Activated CD8-positive, alpha-beta T cell treated with anti-CD3 and anti-CD28 coated beads for 36 hours (primary cell): ENCODE measurements at regions of chr4 and their contacts with region 1.

Region 1: GRCh38 chr4:57163530-57164459 is 53.6 kb upstream of the IGFBP7 start:
- DNase-seq: peak; percentile 81
- ATAC-seq: peak; percentile 97
- H3K4me3 Mint-ChIP-seq: peak overlapping the region; percentile 78
- H3K27ac Mint-ChIP-seq: peak overlapping the region; percentile 43
- H3K4me1 Mint-ChIP-seq: peaks cover 8% of the 10 kb centered on the region
- H3K27me3 Mint-ChIP-seq: peaks cover 29% of the 10 kb centered on the region
- CTCF ChIP-seq: peak; percentile 88

Region 2: GRCh38 chr4:57139783-57140182 is 24.0 kb before region 1 on chr4:
- CTCF ChIA-PET with region 1: interaction called, 11 read pairs
- POLR2A ChIA-PET with region 1: no interaction called
- intact Hi-C with region 1: no loop called
- DNase-seq: no peak
- ATAC-seq: no peak
- H3K4me3 Mint-ChIP-seq: no peak overlapping the region
- H3K27ac Mint-ChIP-seq: no peak overlapping the region
- H3K4me1 Mint-ChIP-seq: no peaks in the 10 kb centered on the region
- H3K27me3 Mint-ChIP-seq: peaks cover 5% of the 10 kb centered on the region
- CTCF ChIP-seq: no peak

Region 3: DNA sequence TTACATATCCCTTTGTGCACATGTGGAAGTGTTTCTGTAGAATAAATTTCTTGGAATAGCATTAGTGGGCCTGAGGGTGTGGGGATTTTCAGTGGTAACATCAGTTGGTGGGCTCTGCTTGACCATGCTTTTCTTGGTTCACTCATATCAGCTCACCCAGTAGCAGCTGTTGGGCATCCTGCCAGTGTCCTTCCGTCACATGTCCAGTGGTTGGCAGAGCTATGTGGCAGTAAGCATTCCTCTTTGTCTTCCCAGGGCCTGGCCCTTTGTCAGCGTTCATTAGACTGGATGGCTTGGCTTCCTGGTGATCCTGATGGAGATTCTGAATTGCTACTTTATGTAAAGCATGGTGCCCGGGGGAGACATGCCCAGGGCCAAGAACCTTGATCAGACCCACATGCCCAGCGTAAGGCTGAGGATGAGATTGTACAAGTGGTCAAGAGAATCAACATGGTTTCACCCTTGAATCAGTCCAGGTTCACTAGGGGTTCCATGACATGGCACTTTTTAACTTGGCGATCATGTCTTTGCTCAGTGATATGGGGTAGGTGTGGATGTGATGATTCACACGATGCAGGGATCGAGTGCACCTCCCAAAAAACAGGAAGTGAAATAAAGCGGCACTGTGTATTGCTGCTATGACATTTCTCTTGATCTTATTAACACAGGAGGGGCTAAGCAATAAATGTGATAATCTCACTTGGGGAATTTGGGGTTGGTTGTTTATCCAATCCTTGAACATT is 18.5 kb after region 1 on chr4:
- CTCF ChIA-PET with region 1: interaction called, 13 read pairs
- POLR2A ChIA-PET with region 1: no interaction called
- intact Hi-C with region 1: no loop called
- DNase-seq: no peak
- ATAC-seq: no peak
- H3K4me3 Mint-ChIP-seq: no peak overlapping the region
- H3K27ac Mint-ChIP-seq: no peak overlapping the region
- H3K4me1 Mint-ChIP-seq: no peaks in the 10 kb centered on the region
- H3K27me3 Mint-ChIP-seq: peaks cover 2% of the 10 kb centered on the region
- CTCF ChIP-seq: no peak

Region 4: DNA sequence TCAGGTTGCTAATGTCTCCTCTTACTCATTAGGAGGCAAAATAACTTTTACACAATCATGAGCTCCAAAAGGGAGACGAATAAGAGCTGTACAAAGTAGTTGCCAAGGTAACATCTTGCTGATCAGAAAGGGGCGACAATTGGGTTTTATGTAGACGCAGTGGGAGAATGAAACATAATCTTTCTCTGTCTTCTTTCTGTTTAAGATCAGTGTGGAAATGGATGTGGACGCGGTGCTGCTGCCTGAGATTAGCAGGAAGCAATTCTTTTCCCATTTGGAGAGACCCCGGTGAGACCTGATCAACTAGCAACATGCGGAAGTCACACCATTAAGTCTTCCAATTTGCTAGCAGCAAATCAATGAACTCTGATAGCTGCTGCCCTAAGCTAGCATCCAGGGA is 37.1 kb after region 1 on chr4:
- CTCF ChIA-PET with region 1: interaction called, 18 read pairs
- POLR2A ChIA-PET with region 1: no interaction called
- intact Hi-C with region 1: no loop called
- DNase-seq: no peak
- ATAC-seq: no peak
- H3K4me3 Mint-ChIP-seq: no peak overlapping the region
- H3K27ac Mint-ChIP-seq: no peak overlapping the region
- H3K4me1 Mint-ChIP-seq: no peaks in the 10 kb centered on the region
- H3K27me3 Mint-ChIP-seq: peaks cover 9% of the 10 kb centered on the region
- CTCF ChIP-seq: no peak

Region 5: GRCh38 chr4:57412259-57413054 is 248.7 kb after region 1 on chr4:
- CTCF ChIA-PET with region 1: interaction called, 10 read pairs
- POLR2A ChIA-PET with region 1: no interaction called
- intact Hi-C with region 1: no loop called
- DNase-seq: no peak
- ATAC-seq: no peak
- H3K4me3 Mint-ChIP-seq: no peak overlapping the region
- H3K27ac Mint-ChIP-seq: no peak overlapping the region
- H3K4me1 Mint-ChIP-seq: no peaks in the 10 kb centered on the region
- H3K27me3 Mint-ChIP-seq: no peaks in the 10 kb centered on the region
- CTCF ChIP-seq: no peak